ENCODE measurements at regions of chr12 and their contacts with region 1.

Region 1: GRCh38 chr12:124321040-124321481 is 26.2 kb downstream of the RFLNA start:
- DNase-seq: peak; percentile 75
- H3K4me3 ChIP-seq: no peak overlapping the region
- H3K27ac ChIP-seq: no peak overlapping the region
- H3K4me1 ChIP-seq: no peaks in the 10 kb centered on the region
- H3K27me3 ChIP-seq: no peaks in the 10 kb centered on the region
- CTCF ChIP-seq: peak; percentile 93 to 95 (median 95)
- EP300 ChIP-seq: no peak
- POLR2A ChIP-seq: no peak

Region 2: DNA sequence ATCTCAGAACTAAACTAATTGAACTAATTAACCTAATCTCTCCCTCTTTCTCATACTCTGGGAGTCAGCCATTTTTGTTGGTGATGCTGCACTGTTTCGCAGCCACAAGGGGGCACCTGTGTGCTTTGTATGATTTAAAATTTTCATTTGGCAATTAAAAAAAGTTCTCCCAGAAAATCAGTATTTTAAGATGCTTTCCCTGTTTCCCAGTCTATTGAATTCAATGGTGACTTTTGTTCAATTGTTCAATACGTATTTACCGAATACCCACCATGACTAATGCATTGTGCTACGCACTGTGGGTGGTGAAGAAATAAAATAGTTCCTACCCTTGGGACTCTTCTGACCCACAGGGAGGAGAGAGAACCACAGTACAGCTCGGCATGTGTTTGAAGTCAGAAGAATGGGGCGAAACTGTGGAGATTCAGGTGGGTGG is 284.4 kb before region 1 on chr12:
- in situ Hi-C with region 1: loop called (anchors 5 to 25 kb)
- intact Hi-C with region 1: no loop called
- DNase-seq: peak; percentile 35
- H3K4me3 ChIP-seq: no peak overlapping the region
- H3K27ac ChIP-seq: no peak overlapping the region
- H3K4me1 ChIP-seq: no peaks in the 10 kb centered on the region
- H3K27me3 ChIP-seq: no peaks in the 10 kb centered on the region
- CTCF ChIP-seq: peak; percentile 87 to 93 (median 88)
- EP300 ChIP-seq: no peak
- POLR2A ChIP-seq: no peak

Region 3: GRCh38 chr12:124044809-124045321 is 276.2 kb before region 1 on chr12:
- in situ Hi-C with region 1: loop called (anchors 5 to 25 kb)
- intact Hi-C with region 1: loop called (anchors 5 kb)
- DNase-seq: no peak
- H3K4me3 ChIP-seq: no peak overlapping the region
- H3K27ac ChIP-seq: no peak overlapping the region
- H3K4me1 ChIP-seq: no peaks in the 10 kb centered on the region
- H3K27me3 ChIP-seq: no peaks in the 10 kb centered on the region
- CTCF ChIP-seq: no peak
- EP300 ChIP-seq: no peak
- POLR2A ChIP-seq: no peak

Region 4: DNA sequence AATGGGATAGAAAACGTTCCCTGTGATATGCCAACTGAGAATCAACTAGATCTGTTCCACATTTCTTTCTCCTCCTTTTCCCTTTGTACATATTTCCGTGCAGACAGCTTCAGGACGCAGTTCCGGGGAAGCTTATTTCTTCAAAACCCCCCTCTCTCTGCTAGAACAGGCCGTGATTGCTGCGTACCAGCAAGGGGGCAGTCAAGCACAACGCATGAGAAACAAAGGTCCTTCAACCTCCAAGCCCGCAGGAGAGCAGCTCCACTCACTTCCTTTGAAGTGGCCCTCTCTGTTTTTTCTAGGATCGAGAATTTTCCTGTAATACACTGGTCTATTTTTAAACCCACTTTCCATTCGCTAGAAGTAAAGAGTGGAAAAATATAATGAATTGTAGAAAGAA is 267.2 kb before region 1 on chr12:
- in situ Hi-C with region 1: loop called in 3 of 4 experiments (anchors 10 to 25 kb)
- intact Hi-C with region 1: loop called (anchors 5 kb)
- DNase-seq: peak; percentile 36
- H3K4me3 ChIP-seq: no peak overlapping the region
- H3K27ac ChIP-seq: no peak overlapping the region
- H3K4me1 ChIP-seq: peaks cover 0 to 5% (median 0%) of the 10 kb centered on the region in 4 donors
- H3K27me3 ChIP-seq: no peaks in the 10 kb centered on the region
- CTCF ChIP-seq: peak; percentile 53 to 73 (median 59)
- EP300 ChIP-seq: no peak
- POLR2A ChIP-seq: no peak

Region 5: DNA sequence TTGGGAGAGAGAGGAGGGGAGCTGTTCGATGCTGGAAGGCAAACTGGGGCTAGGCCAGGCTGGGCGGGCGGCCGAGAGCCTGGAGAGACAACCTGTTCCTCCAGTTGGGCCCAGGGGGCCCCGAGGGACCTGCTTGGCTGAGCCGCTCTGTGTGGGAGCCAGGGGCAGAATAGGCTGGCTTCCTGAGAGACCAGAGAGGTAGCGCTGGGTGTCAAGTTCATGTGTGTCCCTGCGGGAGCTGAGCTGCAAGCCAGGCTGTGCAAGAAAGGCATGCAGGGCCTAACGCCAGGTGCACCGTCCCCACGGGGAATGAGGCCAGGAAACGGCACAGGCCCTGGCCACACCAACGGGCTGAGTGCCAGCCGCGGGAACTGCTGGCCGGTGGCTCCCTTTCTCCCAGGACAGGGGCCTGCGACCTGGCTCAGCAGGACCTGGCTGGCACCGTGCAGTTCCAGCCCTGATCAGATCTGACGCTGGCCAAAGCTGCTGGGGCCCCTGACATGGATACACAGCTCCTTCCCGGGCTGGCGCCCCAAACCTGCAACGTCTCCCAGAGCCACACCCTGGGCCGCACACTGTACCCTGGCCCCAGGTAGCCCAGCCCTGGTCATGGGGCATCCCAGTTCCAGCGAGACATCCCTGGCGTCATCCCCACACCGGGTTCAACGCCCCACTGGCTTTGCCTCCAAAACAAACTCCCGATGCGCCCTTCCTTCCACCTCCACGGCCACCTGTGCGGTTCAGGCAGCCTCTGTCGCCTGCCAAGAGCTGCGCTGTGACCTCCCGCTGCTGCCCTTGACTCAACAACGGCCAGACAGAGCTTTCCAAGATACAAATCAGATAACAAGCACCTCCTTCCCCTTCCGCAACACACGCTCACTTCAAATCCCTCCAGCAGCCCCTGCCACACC is 38.9 kb after region 1 on chr12:
- in situ Hi-C with region 1: no loop called
- intact Hi-C with region 1: loop called (anchors 1 kb)
- DNase-seq: peak; percentile 78
- H3K4me3 ChIP-seq: no peak overlapping the region
- H3K27ac ChIP-seq: peak overlapping the region; percentile 55 to 82 (median 76)
- H3K4me1 ChIP-seq: peaks cover 15 to 26% (median 20%) of the 10 kb centered on the region in 4 donors
- H3K27me3 ChIP-seq: no peaks in the 10 kb centered on the region
- CTCF ChIP-seq: no peak
- EP300 ChIP-seq: no peak
- POLR2A ChIP-seq: no peak